ENCODE measurements at regions of chr11 and their contacts with region 1.

Region 1: GRCh38 chr11:43316451-43316850 is 4.7 kb downstream of the API5 start:
- DNase-seq: peak; percentile 3
- H3K4me3 Mint-ChIP-seq: no peak overlapping the region
- H3K27ac Mint-ChIP-seq: no peak overlapping the region
- H3K4me1 Mint-ChIP-seq: peaks cover 33% of the 10 kb centered on the region
- H3K27me3 Mint-ChIP-seq: no peaks in the 10 kb centered on the region
- CTCF ChIP-seq: no peak

Region 2: DNA sequence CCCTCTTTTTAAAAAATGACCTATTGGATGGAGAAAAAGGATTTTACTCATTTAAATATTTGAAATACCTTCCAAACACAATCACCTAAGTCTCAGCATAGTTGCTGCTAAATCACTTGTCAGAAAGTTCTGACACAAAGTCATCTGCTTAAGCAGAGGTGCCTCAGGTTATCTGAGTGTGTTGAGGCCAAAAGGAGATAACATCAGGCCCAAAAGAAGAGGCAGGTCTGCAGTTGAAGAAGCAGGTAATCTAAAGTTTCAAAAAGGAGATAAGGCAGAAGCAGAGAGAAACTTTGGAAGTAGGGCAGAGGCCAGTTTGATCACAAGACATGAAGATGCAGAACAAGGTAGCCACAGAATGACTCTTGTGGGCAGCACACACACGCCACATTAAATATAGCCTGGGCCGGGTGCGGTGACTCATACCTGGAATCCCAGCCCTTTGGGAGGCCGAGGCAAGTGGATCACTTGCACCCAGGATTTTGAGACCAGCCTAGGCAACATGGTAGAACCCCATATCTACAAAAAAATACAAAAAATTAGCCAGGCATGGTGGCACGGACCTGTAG is 180.4 kb before region 1 on chr11:
- CTCF ChIA-PET with region 1: no interaction called
- intact Hi-C with region 1: no loop called
- DNase-seq: no peak
- H3K4me3 Mint-ChIP-seq: no peak overlapping the region
- H3K27ac Mint-ChIP-seq: no peak overlapping the region
- H3K4me1 Mint-ChIP-seq: no peaks in the 10 kb centered on the region
- H3K27me3 Mint-ChIP-seq: no peaks in the 10 kb centered on the region
- CTCF ChIP-seq: no peak

Region 3: DNA sequence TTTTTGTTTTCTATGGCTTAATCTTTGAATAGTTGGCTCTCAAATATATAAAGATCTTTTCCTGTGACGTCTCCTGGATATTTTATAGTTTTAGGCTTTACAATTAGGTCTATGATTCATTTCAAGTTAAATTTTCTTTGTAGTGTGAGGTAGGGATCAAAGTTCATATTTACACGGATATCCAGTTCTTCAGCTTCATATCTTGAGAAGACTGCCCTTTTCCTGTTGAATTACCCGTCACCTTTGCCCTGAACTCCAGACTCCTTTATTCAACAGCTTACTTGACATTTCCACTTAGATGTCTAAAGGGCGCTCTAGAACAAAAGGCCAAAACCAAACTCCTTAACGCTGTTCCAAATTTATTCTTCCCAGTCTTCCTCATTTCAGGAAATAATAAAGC is 93.9 kb after region 1 on chr11:
- CTCF ChIA-PET with region 1: no interaction called
- intact Hi-C with region 1: loop called (anchors 5 kb)
- DNase-seq: peak; percentile 3
- H3K4me3 Mint-ChIP-seq: peak overlapping the region; percentile 33
- H3K27ac Mint-ChIP-seq: peak overlapping the region; percentile 87
- H3K4me1 Mint-ChIP-seq: peaks cover 22% of the 10 kb centered on the region
- H3K27me3 Mint-ChIP-seq: no peaks in the 10 kb centered on the region
- CTCF ChIP-seq: no peak